ENCODE measurements at regions of chr6 and their contacts with region 1.

Region 1: GRCh38 chr6:10954590-10955010 is 67.7 kb downstream of the SYCP2L start:
- DNase-seq: peak; percentile 89
- H3K4me3 ChIP-seq: no peak overlapping the region
- H3K27ac ChIP-seq: no peak overlapping the region
- H3K4me1 ChIP-seq: no peaks in the 10 kb centered on the region
- H3K27me3 ChIP-seq: no peaks in the 10 kb centered on the region
- CTCF ChIP-seq: peak; percentile 97

Region 2: GRCh38 chr6:10800829-10801535 is 153.6 kb before region 1 on chr6:
- CTCF ChIA-PET with region 1: no interaction called
- POLR2A ChIA-PET with region 1: no interaction called
- intact Hi-C with region 1: no loop called
- DNase-seq: peak; percentile 64
- H3K4me3 ChIP-seq: no peak overlapping the region
- H3K27ac ChIP-seq: no peak overlapping the region
- H3K4me1 ChIP-seq: no peaks in the 10 kb centered on the region
- H3K27me3 ChIP-seq: no peaks in the 10 kb centered on the region
- CTCF ChIP-seq: peak; percentile 99

Region 3: DNA sequence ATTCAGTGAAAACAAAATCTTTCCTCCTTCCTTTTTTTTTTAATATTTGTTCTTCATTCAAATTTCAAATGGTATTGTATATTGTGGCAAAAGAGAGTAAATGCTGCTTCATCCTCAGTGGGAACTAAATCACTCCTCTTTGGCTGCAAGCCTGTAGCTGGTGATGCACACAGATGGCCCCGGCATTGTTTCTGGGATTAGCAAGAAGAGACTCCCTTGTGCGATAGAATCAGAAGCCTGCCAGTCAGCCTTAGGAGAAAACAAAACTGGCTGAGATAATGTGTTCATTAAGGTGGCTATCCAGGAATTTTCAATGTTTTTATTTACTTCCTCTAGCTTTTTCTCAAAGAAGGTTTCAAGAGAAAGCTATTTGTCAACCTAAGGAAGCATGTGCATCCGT is 110.2 kb after region 1 on chr6:
- CTCF ChIA-PET with region 1: interaction called, 61 read pairs
- POLR2A ChIA-PET with region 1: interaction called, 3 read pairs
- intact Hi-C with region 1: loop called (anchors 1 kb)
- DNase-seq: peak; percentile 45
- H3K4me3 ChIP-seq: no peak overlapping the region
- H3K27ac ChIP-seq: no peak overlapping the region
- H3K4me1 ChIP-seq: no peaks in the 10 kb centered on the region
- H3K27me3 ChIP-seq: no peaks in the 10 kb centered on the region
- CTCF ChIP-seq: no peak

Region 4: GRCh38 chr6:11575408-11576033 is 620.9 kb after region 1 on chr6:
- CTCF ChIA-PET with region 1: interaction called, 5 read pairs
- POLR2A ChIA-PET with region 1: no interaction called
- intact Hi-C with region 1: loop called (anchors 1 kb)
- DNase-seq: peak; percentile 80
- H3K4me3 ChIP-seq: no peak overlapping the region
- H3K27ac ChIP-seq: no peak overlapping the region
- H3K4me1 ChIP-seq: peaks cover 7% of the 10 kb centered on the region
- H3K27me3 ChIP-seq: no peaks in the 10 kb centered on the region
- CTCF ChIP-seq: peak; percentile 92